K562 (cell line): ENCODE measurements at regions of chr18 and their contacts with region 1.

Region 1: GRCh38 chr18:31555971-31556747 is 35.5 kb upstream of the TTR start:
- DNase-seq: peak; percentile 56 to 75 (median 60)
- ATAC-seq: peak; percentile 82
- H3K4me3 ChIP-seq: no peak overlapping the region
- H3K27ac ChIP-seq: no peak overlapping the region
- H3K4me1 ChIP-seq: no peaks in the 10 kb centered on the region
- H3K27me3 ChIP-seq: peaks cover 3 to 8% of the 10 kb centered on the region in 2 experiments; a peak in 2 of 5 replicates
- CTCF ChIP-seq: peak; percentile 51 to 92 (median 75); a peak in 5 of 6 replicates
- EP300 ChIP-seq: no peak
- POLR2A ChIP-seq: no peak
- RAD21 ChIP-seq: peak; percentile 92 to 97

Region 2: DNA sequence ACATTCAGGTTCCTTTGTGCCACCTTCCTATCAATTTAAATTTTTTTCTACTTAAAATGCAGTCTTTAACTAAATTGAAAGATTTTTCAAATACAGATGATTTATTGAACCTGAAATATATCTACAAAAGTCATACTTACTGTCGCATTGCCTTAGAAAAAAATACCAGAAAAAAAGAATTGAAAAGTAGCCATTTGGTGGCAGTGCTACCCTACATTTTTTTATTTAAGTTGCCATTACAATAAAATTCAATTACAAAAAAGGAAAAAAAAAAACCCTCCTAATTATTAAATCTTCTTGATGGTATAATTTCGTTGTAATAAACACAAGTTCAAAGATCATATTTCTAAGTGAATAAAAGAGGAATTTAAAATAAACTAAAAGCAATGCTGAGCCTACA is 557.0 kb before region 1 on chr18:
- CTCF ChIA-PET with region 1: interaction called, 3 read pairs
- POLR2A ChIA-PET with region 1: no interaction called
- in situ Hi-C with region 1: no loop called
- intact Hi-C with region 1: loop called (anchors 5 kb)
- DNase-seq: no peak
- ATAC-seq: no peak
- H3K4me3 ChIP-seq: no peak overlapping the region
- H3K27ac ChIP-seq: no peak overlapping the region
- H3K4me1 ChIP-seq: no peaks in the 10 kb centered on the region
- H3K27me3 ChIP-seq: no peaks in the 10 kb centered on the region; a peak in 1 of 5 replicates
- CTCF ChIP-seq: peak in 1 of 3 experiments; percentile 52; a peak in 2 of 6 replicates
- EP300 ChIP-seq: no peak
- POLR2A ChIP-seq: no peak
- RAD21 ChIP-seq: peak; percentile 51 to 53

Region 3: DNA sequence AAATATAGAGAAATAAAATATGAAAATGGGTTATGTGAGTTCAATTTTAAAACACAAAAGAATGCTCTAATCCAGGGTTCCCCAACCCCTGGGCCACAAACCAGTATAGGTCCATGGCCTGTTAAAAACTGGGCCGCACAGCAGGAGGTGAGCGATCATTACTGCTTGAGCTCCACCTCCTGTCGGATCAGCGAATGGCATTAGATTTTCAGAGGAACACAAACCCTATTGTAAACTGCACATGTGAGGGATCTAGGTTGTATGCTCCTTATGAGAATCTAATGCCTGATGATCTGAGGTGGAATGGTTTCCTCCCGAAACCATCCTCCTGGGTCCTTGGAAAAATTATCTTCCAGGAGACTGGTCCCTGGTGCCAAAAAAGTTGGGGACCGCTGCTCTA is 70.2 kb after region 1 on chr18:
- CTCF ChIA-PET with region 1: no interaction called
- POLR2A ChIA-PET with region 1: no interaction called
- in situ Hi-C with region 1: no loop called
- intact Hi-C with region 1: loop called (anchors 1 kb)
- DNase-seq: peak in 1 of 4 experiments; percentile 52
- ATAC-seq: peak; percentile 88
- H3K4me3 ChIP-seq: no peak overlapping the region
- H3K27ac ChIP-seq: no peak overlapping the region
- H3K4me1 ChIP-seq: no peaks in the 10 kb centered on the region; a peak in 1 of 5 replicates
- H3K27me3 ChIP-seq: no peaks in the 10 kb centered on the region
- CTCF ChIP-seq: peak; percentile 49 to 53 (median 52); a peak in 5 of 6 replicates
- EP300 ChIP-seq: no peak
- POLR2A ChIP-seq: no peak
- RAD21 ChIP-seq: peak; percentile 31 to 75; a peak in 2 of 4 replicates

Region 4: DNA sequence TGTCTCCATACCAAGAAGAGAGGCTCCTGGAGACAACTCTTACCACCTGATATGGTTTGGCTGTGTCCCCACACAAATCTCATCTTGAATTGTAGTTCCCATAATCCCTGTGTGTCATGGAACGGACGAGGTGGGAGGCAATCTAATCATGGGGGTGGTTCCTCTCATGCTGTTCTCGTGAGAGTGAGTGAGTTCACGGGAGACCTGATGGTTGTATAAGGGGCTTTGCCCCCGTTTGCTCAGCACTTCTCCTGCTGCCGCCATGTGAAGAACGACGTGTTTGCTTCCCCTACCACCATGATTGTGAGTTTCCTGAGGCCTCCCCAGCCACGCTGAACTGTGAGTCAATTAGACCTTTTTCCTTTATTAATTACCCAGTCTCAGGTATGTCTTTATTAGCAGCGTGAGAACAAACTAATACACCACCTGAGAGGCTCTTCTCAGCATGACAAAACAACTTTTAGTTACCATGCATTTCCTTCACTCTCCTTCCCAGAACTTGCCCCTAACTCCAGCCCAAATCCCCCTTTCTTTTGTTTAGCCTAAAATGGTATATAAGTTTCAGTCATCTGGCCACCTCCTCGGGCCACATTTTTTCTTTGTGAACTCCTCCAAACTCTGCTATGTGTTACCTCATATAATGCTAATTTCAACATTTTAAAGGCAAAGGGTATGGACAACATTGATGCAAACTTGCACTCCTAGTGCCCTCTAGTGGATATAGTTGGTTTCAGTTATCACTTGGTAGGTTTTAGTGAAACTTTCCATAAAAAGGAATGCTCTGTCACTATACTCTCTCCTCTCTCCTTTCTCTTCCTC is 263.2 kb after region 1 on chr18:
- CTCF ChIA-PET with region 1: interaction called, 13 read pairs
- POLR2A ChIA-PET with region 1: no interaction called
- in situ Hi-C with region 1: loop called (anchors 10 kb)
- intact Hi-C with region 1: loop called (anchors 1 kb)
- DNase-seq: peak; percentile 15 to 73 (median 20)
- ATAC-seq: peak; percentile 86
- H3K4me3 ChIP-seq: no peak overlapping the region
- H3K27ac ChIP-seq: no peak overlapping the region
- H3K4me1 ChIP-seq: peaks cover 0 to 5% of the 10 kb centered on the region in 2 experiments; a peak in 3 of 5 replicates
- H3K27me3 ChIP-seq: no peaks in the 10 kb centered on the region
- CTCF ChIP-seq: peak; percentile 59 to 84 (median 72); a peak in 5 of 6 replicates
- EP300 ChIP-seq: no peak
- POLR2A ChIP-seq: no peak
- RAD21 ChIP-seq: peak; percentile 67 to 95

Region 5: GRCh38 chr18:31929273-31929672 is 373.1 kb after region 1 on chr18:
- CTCF ChIA-PET with region 1: no interaction called
- POLR2A ChIA-PET with region 1: no interaction called
- in situ Hi-C with region 1: no loop called
- intact Hi-C with region 1: no loop called
- DNase-seq: no peak
- ATAC-seq: no peak
- H3K4me3 ChIP-seq: no peak overlapping the region
- H3K27ac ChIP-seq: no peak overlapping the region
- H3K4me1 ChIP-seq: no peaks in the 10 kb centered on the region
- H3K27me3 ChIP-seq: no peaks in the 10 kb centered on the region
- CTCF ChIP-seq: no peak
- EP300 ChIP-seq: no peak
- POLR2A ChIP-seq: no peak
- RAD21 ChIP-seq: no peak

Region 6: DNA sequence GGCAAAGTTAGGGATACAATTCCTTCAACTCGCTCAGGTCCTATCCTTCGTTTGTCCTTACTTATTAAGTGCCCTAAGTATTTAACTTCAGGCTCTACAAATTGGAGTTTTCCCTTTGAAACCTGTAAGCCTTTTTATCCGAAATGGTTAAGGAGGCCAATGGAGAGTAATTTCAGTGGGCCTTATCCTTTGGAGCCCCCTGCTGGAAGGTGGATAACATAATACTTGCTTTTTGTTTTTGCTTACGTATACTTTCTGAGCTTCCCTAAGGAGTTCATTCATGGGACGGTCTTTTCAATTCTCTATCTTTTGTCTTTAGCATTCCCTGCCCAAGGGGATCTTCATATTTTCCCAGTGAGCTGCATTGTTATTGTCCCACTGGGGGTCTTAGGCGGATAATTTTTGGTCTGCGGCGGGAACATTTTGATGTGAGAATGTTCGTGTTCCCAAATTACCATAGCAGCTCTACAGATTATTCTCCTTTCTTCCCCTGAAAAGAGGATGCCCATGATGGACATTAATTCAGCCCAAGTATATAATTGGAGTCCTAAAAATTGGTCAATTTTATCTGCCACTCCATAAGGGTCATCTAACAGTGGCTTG is 421.2 kb after region 1 on chr18:
- CTCF ChIA-PET with region 1: interaction called, 7 read pairs
- POLR2A ChIA-PET with region 1: interaction called, 5 read pairs
- in situ Hi-C with region 1: no loop called
- intact Hi-C with region 1: loop called (anchors 1 kb)
- DNase-seq: peak; percentile 60 to 76 (median 61)
- ATAC-seq: peak; percentile 95
- H3K4me3 ChIP-seq: no peak overlapping the region
- H3K27ac ChIP-seq: no peak overlapping the region
- H3K4me1 ChIP-seq: no peaks in the 10 kb centered on the region
- H3K27me3 ChIP-seq: peaks cover 0 to 4% of the 10 kb centered on the region in 2 experiments; a peak in 1 of 5 replicates
- CTCF ChIP-seq: peak; percentile 63 to 93 (median 77); a peak in 5 of 6 replicates
- EP300 ChIP-seq: no peak
- POLR2A ChIP-seq: no peak
- RAD21 ChIP-seq: peak; percentile 80 to 94